CD4-positive, alpha-beta memory T cell (primary cell): ENCODE measurements at regions of chr19 and their contacts with region 1.

Region 1: GRCh38 chr19:6048808-6049405 is 61.4 kb downstream of the RFX2 start:
- DNase-seq: peak; percentile 73 to 77 (median 75)
- H3K4me3 ChIP-seq: no peak overlapping the region
- H3K4me3 Mint-ChIP-seq: peak overlapping the region in 1 of 8 donors; percentile 26
- H3K27ac ChIP-seq: no peak overlapping the region
- H3K27ac Mint-ChIP-seq: peak overlapping the region in 1 of 7 donors; percentile 15
- H3K4me1 ChIP-seq: no peaks in the 10 kb centered on the region
- H3K4me1 Mint-ChIP-seq: peaks cover 1 to 6% (median 4%) of the 10 kb centered on the region in 4 donors
- H3K27me3 ChIP-seq: no peaks in the 10 kb centered on the region
- H3K27me3 Mint-ChIP-seq: peaks cover 0 to 2% of the 10 kb centered on the region in 2 donors

Region 2: GRCh38 chr19:5993648-5994358 is 55.1 kb before region 1 on chr19:
- CTCF ChIA-PET with region 1: no interaction called
- POLR2A ChIA-PET with region 1: no interaction called
- intact Hi-C with region 1: no loop called
- DNase-seq: no peak
- H3K4me3 ChIP-seq: no peak overlapping the region
- H3K4me3 Mint-ChIP-seq: no peak overlapping the region
- H3K27ac ChIP-seq: no peak overlapping the region
- H3K27ac Mint-ChIP-seq: no peak overlapping the region
- H3K4me1 ChIP-seq: no peaks in the 10 kb centered on the region
- H3K4me1 Mint-ChIP-seq: no peaks in the 10 kb centered on the region
- H3K27me3 ChIP-seq: no peaks in the 10 kb centered on the region
- H3K27me3 Mint-ChIP-seq: no peaks in the 10 kb centered on the region

Region 3: DNA sequence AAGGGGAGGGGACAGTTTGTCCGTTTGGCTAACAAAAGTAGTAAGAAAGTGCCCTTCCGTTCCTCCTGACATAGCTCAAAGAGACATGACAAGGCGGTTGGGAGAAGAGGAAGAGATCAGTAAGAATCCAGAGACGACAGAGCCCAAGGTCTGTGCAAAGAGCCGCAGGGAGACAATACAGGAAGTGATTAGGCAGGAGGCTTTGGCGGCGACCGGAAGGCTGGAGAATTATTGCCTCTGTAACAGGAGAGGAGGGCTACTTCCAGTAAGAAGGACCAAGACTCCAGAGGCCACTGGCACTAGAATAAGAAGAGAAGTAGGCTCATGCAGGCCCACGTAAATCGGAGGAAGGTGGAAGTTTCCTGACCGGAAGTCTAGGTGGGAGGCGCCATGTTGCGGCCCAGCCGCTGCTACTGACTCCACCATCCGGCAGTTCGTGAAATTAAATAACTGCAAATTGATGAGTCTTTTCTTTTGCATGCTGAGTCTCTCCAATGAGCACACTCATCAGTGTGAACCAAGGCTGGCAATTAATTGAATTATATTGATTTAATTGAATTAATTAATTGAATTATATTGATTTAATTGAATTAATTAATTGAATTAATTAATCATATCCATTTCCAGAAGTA is 51.5 kb after region 1 on chr19:
- CTCF ChIA-PET with region 1: interaction called, 19 read pairs
- POLR2A ChIA-PET with region 1: no interaction called
- intact Hi-C with region 1: no loop called
- DNase-seq: peak in 4 of 5 donors; percentile 23 to 50 (median 28)
- H3K4me3 ChIP-seq: no peak overlapping the region
- H3K4me3 Mint-ChIP-seq: peak overlapping the region in 7 of 8 donors; percentile 47 to 87 (median 80)
- H3K27ac ChIP-seq: no peak overlapping the region
- H3K27ac Mint-ChIP-seq: peak overlapping the region in 6 of 7 donors; percentile 32 to 95 (median 82)
- H3K4me1 ChIP-seq: peaks cover 3% of the 10 kb centered on the region
- H3K4me1 Mint-ChIP-seq: peaks cover 6 to 16% (median 10%) of the 10 kb centered on the region in 4 donors
- H3K27me3 ChIP-seq: no peaks in the 10 kb centered on the region
- H3K27me3 Mint-ChIP-seq: no peaks in the 10 kb centered on the region

Region 4: DNA sequence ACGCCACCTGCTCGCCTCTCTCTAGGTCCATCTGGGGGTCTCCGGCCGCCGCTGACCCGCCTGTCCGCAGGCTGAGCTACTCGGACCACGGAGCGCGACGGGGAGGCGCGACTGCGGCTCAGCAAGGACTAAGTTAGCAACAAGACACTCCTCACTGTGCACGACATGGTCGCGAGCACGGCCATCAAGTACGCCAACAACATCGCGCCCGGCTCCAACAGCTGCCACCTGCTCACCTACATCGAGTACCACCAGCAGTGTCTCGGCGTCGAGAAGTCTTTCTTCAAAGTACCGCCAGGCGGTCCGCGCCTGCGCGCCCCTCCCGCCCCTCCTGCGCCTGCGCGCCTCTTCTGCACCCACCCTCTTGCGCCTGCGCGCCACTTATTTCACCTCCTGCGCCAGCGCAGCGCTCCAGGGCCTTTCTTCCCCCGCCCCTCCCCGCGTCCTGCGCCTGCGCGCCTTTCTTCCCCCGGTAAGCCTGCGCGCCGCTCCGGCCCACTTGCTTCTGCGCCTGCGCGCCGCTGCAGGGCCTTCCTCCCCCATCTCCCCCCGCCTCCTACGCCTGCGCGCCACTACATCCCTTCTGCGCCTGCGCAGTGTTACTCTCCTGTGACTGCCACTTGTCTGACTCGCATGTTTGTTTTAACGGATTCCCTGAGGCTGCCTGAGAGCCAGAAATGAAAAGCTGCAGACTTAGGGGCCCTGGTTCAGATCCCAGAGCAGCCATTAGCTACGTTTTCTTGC is 150.5 kb after region 1 on chr19:
- CTCF ChIA-PET with region 1: no interaction called
- POLR2A ChIA-PET with region 1: no interaction called
- intact Hi-C with region 1: no loop called
- DNase-seq: peak; percentile 99 to 100 (median 99)
- H3K4me3 ChIP-seq: peak overlapping the region; percentile 52 to 89
- H3K4me3 Mint-ChIP-seq: peak overlapping the region; percentile 88 to 97 (median 94)
- H3K27ac ChIP-seq: peak overlapping the region; percentile 64
- H3K27ac Mint-ChIP-seq: peak overlapping the region; percentile 83 to 98 (median 95)
- H3K4me1 ChIP-seq: peaks cover 13% of the 10 kb centered on the region
- H3K4me1 Mint-ChIP-seq: peaks cover 10 to 21% (median 10%) of the 10 kb centered on the region in 4 donors
- H3K27me3 ChIP-seq: peaks cover 2% of the 10 kb centered on the region
- H3K27me3 Mint-ChIP-seq: peaks cover 2 to 4% of the 10 kb centered on the region in 2 donors